OCI-LY7 (cell line): ENCODE measurements at regions of chr3 and their contacts with region 1.

Region 1: GRCh38 chr3:46923559-46924350 is 46.2 kb downstream of the PTH1R start:
- DNase-seq: peak; percentile 79
- H3K4me3 ChIP-seq: no peak overlapping the region
- H3K27ac ChIP-seq: peak overlapping the region; percentile 41
- H3K4me1 ChIP-seq: peaks cover 53% of the 10 kb centered on the region
- CTCF ChIP-seq: peak; percentile 86

Region 2: GRCh38 chr3:46960081-46960701 is 36.4 kb after region 1 on chr3:
- CTCF ChIA-PET with region 1: no interaction called
- POLR2A ChIA-PET with region 1: interaction called, 26 read pairs
- intact Hi-C with region 1: no loop called
- DNase-seq: no peak
- H3K4me3 ChIP-seq: no peak overlapping the region
- H3K27ac ChIP-seq: peak overlapping the region; percentile 23
- H3K4me1 ChIP-seq: peaks cover 76% of the 10 kb centered on the region
- CTCF ChIP-seq: no peak

Region 3: DNA sequence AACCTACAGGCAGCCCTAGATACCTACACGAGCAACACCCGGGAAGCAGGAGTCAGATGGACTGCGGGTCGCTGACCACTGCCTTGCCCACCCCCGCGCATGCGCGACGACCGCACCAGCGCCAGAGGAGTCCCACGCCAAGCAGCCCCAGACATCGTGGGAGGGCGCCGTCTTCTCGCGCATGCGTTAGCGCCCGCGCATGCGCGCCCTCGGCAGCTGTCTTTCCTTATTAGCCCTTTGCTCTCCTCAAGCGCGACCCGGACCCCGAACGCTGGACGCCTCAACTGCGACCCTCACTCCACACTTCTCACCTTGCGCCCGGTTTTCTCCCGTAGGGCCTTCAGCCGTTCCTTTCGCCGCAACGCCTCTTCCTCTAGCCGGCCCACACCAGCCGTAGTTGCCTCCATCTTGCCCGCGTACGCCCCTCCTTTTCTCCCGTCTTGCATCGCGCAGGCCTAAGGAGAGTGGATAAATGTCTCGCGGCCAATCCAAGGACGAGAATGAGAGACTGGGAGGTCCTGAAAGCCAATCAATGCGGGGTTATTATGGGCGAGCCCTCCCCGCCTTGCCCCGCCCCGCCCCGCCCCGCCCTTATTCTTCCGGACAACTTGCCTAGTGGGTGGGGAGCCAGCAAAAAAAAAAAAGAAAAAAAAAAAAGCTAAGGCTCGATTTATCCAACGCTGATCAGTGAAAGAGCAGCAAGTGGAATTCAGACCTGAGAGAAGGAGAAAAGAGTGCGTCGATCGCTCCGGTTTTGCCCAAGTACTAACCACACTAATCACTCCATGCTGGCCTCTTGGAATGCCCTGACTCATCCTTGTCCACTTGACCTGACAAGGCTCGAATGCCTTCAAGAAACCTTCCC is 52.8 kb after region 1 on chr3 and contains the start of gene CCDC12:
- CTCF ChIA-PET with region 1: interaction called, 3 read pairs
- POLR2A ChIA-PET with region 1: interaction called, 39 read pairs
- intact Hi-C with region 1: loop called (anchors 1 kb)
- DNase-seq: peak; percentile 98
- H3K4me3 ChIP-seq: peak within 1 kb of the TSS; percentile 74
- H3K27ac ChIP-seq: peak within 1 kb of the TSS; percentile 82
- H3K4me1 ChIP-seq: peaks cover 70% of the 10 kb centered on the region
- CTCF ChIP-seq: no peak
- total RNA-seq, gene CCDC12: 74.9 and 102 TPM in 2 replicates

Region 4: GRCh38 chr3:47164007-47164881 is 240.5 kb after region 1 on chr3 and contains the start of gene SETD2:
- CTCF ChIA-PET with region 1: no interaction called
- POLR2A ChIA-PET with region 1: interaction called, 5 read pairs
- intact Hi-C with region 1: loop called (anchors 5 kb)
- DNase-seq: peak; percentile 93
- H3K4me3 ChIP-seq: peak within 1 kb of the TSS; percentile 85
- H3K27ac ChIP-seq: peak within 1 kb of the TSS; percentile 85
- H3K4me1 ChIP-seq: peaks cover 45% of the 10 kb centered on the region
- CTCF ChIP-seq: peak; percentile 79
- total RNA-seq, gene SETD2: 55.7 and 62.7 TPM in 2 replicates

Region 5: GRCh38 chr3:47365213-47366153 is 441.7 kb after region 1 on chr3:
- CTCF ChIA-PET with region 1: no interaction called
- POLR2A ChIA-PET with region 1: no interaction called
- intact Hi-C with region 1: loop called (anchors 5 kb)
- DNase-seq: no peak
- H3K4me3 ChIP-seq: no peak overlapping the region
- H3K27ac ChIP-seq: no peak overlapping the region
- H3K4me1 ChIP-seq: peaks cover 7% of the 10 kb centered on the region
- CTCF ChIP-seq: no peak

Region 6: GRCh38 chr3:47571391-47572175 is 647.8 kb after region 1 on chr3:
- CTCF ChIA-PET with region 1: no interaction called
- POLR2A ChIA-PET with region 1: no interaction called
- intact Hi-C with region 1: no loop called
- DNase-seq: no peak
- H3K4me3 ChIP-seq: no peak overlapping the region
- H3K27ac ChIP-seq: no peak overlapping the region
- H3K4me1 ChIP-seq: no peaks in the 10 kb centered on the region
- CTCF ChIP-seq: no peak